Heart right ventricle (tissue), 16 donors: ENCODE measurements at regions of chr22 and their contacts with region 1.

Region 1: GRCh38 chr22:30902496-30903357 is 65.8 kb downstream of the MORC2 start:
- DNase-seq: no peak
- ATAC-seq: no peak
- H3K4me3 ChIP-seq: no peak overlapping the region
- H3K27ac ChIP-seq: no peak overlapping the region
- H3K4me1 ChIP-seq: no peaks in the 10 kb centered on the region
- H3K27me3 ChIP-seq: no peaks in the 10 kb centered on the region
- CTCF ChIP-seq: no peak

Region 2: GRCh38 chr22:30649430-30650007 is 253.2 kb before region 1 on chr22:
- intact Hi-C with region 1: loop called in 1 of 10 experiments (anchors 10 kb)
- DNase-seq: no peak
- ATAC-seq: peak in 6 of 8 donors; percentile 67 to 90 (median 86)
- H3K4me3 ChIP-seq: no peak overlapping the region
- H3K27ac ChIP-seq: peak overlapping the region in 1 of 10 donors; percentile 22
- H3K4me1 ChIP-seq: peaks cover 0 to 17% (median under 1%) of the 10 kb centered on the region in 9 donors
- H3K27me3 ChIP-seq: no peaks in the 10 kb centered on the region
- CTCF ChIP-seq: no peak